A549 (cell line): ENCODE measurements at regions of chr10 and their contacts with region 1.

Region 1: GRCh38 chr10:3095373-3096139 is 28.2 kb downstream of the PFKP start:
- DNase-seq: peak; percentile 92 to 98
- ATAC-seq: peak; percentile 71 to 82
- H3K4me3 ChIP-seq: peak overlapping the region; percentile 29
- H3K27ac ChIP-seq: peak overlapping the region; percentile 92 to 99
- H3K4me1 ChIP-seq: peaks cover 90% of the 10 kb centered on the region
- CTCF ChIP-seq: no peak
- EP300 ChIP-seq: peak; percentile 91 to 97; a peak in 4 of 5 replicates
- POLR2A ChIP-seq: no peak
- RAD21 ChIP-seq: peak in 1 of 2 experiments; percentile 7; a peak in 1 of 5 replicates

Region 2: GRCh38 chr10:3068968-3069677 is 26.4 kb before region 1 on chr10:
- CTCF ChIA-PET with region 1: interaction called, 24 read pairs
- POLR2A ChIA-PET with region 1: interaction called, 17 read pairs
- DNase-seq: no peak
- ATAC-seq: peak in 1 of 2 experiments; percentile 5; a peak in 3 of 6 replicates
- H3K4me3 ChIP-seq: peak overlapping the region; percentile 97
- H3K27ac ChIP-seq: peak overlapping the region; percentile 96
- H3K4me1 ChIP-seq: peaks cover 58% of the 10 kb centered on the region
- CTCF ChIP-seq: no peak; the same call in 1 of the 3 replicates
- EP300 ChIP-seq: no peak
- POLR2A ChIP-seq: no peak
- RAD21 ChIP-seq: no peak

Region 3: GRCh38 chr10:3077975-3078921 is 17.3 kb before region 1 on chr10:
- CTCF ChIA-PET with region 1: interaction called, 14 read pairs
- POLR2A ChIA-PET with region 1: interaction called, 12 read pairs
- DNase-seq: no peak
- ATAC-seq: no peak; a peak in 1 of 6 replicates
- H3K4me3 ChIP-seq: no peak overlapping the region
- H3K27ac ChIP-seq: peak overlapping the region in 1 of 2 experiments; percentile 58; a peak in 3 of 6 replicates
- H3K4me1 ChIP-seq: peaks cover 90% of the 10 kb centered on the region
- CTCF ChIP-seq: no peak
- EP300 ChIP-seq: no peak
- POLR2A ChIP-seq: no peak
- RAD21 ChIP-seq: no peak

Region 4: GRCh38 chr10:3107426-3107961 is 11.9 kb after region 1 on chr10:
- CTCF ChIA-PET with region 1: interaction called, 13 read pairs
- POLR2A ChIA-PET with region 1: interaction called, 33 read pairs
- DNase-seq: peak; percentile 88 to 95
- ATAC-seq: peak; percentile 78 to 80
- H3K4me3 ChIP-seq: peak overlapping the region; percentile 15; the same call in 1 of the 3 replicates
- H3K27ac ChIP-seq: peak overlapping the region; percentile 86 to 92
- H3K4me1 ChIP-seq: peaks cover 94% of the 10 kb centered on the region
- CTCF ChIP-seq: no peak
- EP300 ChIP-seq: peak; percentile 82 to 96; a peak in 3 of 5 replicates
- POLR2A ChIP-seq: no peak
- RAD21 ChIP-seq: peak; percentile 4 to 42; a peak in 2 of 5 replicates

Region 5: DNA sequence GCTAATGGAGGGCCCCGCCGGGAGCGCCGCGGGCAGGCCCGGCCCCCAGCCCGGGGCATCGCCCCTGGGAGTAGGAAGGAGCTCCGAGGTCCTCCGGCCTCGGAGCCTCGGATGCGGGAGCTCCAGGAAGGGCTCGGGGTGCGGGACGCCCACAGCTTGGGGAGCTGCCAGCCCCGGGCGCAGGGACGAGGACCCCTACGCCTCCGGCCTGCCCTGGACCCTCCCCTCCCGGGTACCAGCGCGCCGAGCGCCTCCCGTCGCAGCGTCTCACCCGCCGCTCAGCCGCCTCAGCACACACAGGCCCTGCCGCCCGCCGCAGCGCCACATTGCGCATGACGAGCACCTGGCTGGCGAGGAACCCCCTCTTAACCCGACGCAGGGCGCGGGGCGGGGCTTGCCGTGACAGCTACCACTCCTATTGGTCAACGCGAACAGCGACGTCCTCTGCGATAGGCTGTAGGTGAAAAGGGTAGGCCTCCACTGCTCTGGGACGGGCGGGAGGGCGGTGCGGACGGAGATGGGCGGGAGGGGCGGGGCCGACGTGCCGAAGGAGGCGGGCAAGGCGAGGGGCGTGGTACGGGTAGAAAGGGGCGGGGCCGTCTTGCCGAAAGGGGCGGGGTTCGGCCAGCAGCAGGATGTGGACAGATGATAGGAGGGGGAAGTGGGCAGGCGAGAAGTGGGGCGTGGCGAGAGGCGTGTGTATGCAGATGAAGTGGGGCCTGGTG is 77.1 kb after region 1 on chr10 and contains the start of gene PITRM1:
- CTCF ChIA-PET with region 1: no interaction called
- POLR2A ChIA-PET with region 1: interaction called, 10 read pairs
- DNase-seq: peak; percentile 97 to 99
- ATAC-seq: peak; percentile 94 to 98
- H3K4me3 ChIP-seq: peak within 1 kb of the TSS; percentile 82
- H3K27ac ChIP-seq: peak within 1 kb of the TSS; percentile 78 to 93
- H3K4me1 ChIP-seq: peaks cover 10% of the 10 kb centered on the region; the same call in 1 of the 3 replicates
- CTCF ChIP-seq: no peak
- EP300 ChIP-seq: no peak
- POLR2A ChIP-seq: peak; percentile 99
- RAD21 ChIP-seq: 0 out of 5 replicates have a peak, but pooled peaks of 1 of the 2 experiments have one; percentile 11
- polyA plus RNA-seq, gene PITRM1: 45.9 and 62.3 TPM in 2 replicates